B cell (primary cell): ENCODE measurements at regions of chr1 and their contacts with region 1.

Region 1: GRCh38 chr1:212291505-212292134 is 6.4 kb downstream of the PPP2R5A start:
- DNase-seq: peak; percentile 78
- ATAC-seq: peak; percentile 87
- H3K4me3 ChIP-seq: no peak overlapping the region
- H3K4me3 Mint-ChIP-seq: peak overlapping the region; percentile 21
- H3K27ac ChIP-seq: no peak overlapping the region
- H3K27ac Mint-ChIP-seq: peak overlapping the region; percentile 46
- H3K4me1 ChIP-seq: peaks cover 29 to 61% of the 10 kb centered on the region in 2 donors
- H3K4me1 Mint-ChIP-seq: peaks cover 77% of the 10 kb centered on the region
- H3K27me3 ChIP-seq: no peaks in the 10 kb centered on the region
- H3K27me3 Mint-ChIP-seq: no peaks in the 10 kb centered on the region
- CTCF ChIP-seq: peak; percentile 82

Region 2: DNA sequence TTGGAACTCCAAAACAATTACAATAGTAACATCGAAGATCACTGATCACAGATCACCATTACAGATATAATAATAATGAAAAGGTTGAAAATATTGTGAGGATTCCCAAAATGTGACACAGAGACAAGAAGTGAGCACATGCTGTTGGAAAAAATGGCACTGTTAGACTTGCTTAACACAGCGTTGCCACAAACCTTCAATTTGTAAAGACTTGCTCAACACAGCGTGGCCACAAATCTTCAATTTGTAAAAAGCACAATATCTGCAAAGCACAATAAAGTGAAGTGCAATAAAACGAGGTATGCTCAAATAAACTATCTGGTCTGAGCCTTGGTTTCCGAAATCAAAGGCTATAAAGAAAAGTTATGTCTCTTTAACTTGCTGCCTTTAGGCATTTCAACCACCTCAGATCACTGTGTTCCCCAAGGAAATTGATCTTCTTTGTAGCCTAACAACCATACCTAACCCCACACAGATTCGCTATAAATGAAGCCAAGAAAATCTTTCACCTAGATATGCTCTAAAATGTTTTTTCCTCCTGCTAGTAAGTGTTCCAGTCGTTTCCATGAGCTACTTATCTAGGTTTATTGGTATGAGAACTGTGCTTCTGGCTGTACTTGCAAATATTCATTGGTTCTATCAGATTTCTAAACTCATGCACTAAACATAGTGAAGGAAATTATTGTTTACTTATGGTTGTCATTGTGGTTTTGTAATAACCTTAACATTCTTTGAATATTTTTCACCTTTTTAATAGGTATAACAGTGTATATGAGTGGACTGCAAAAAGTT is 447.9 kb before region 1 on chr1:
- CTCF ChIA-PET with region 1: no interaction called
- POLR2A ChIA-PET with region 1: no interaction called
- intact Hi-C with region 1: no loop called
- DNase-seq: no peak
- ATAC-seq: no peak
- H3K4me3 ChIP-seq: no peak overlapping the region
- H3K4me3 Mint-ChIP-seq: peak overlapping the region; percentile 26
- H3K27ac ChIP-seq: no peak overlapping the region
- H3K27ac Mint-ChIP-seq: peak overlapping the region; percentile 32
- H3K4me1 ChIP-seq: peaks cover 7 to 8% of the 10 kb centered on the region in 2 donors
- H3K4me1 Mint-ChIP-seq: peaks cover 16% of the 10 kb centered on the region
- H3K27me3 ChIP-seq: no peaks in the 10 kb centered on the region
- H3K27me3 Mint-ChIP-seq: no peaks in the 10 kb centered on the region
- CTCF ChIP-seq: no peak

Region 3: GRCh38 chr1:212062832-212063438 is 228.7 kb before region 1 on chr1:
- CTCF ChIA-PET with region 1: interaction called, 91 read pairs
- POLR2A ChIA-PET with region 1: interaction called, 5 read pairs
- intact Hi-C with region 1: loop called (anchors 1 kb)
- DNase-seq: peak; percentile 56
- ATAC-seq: no peak
- H3K4me3 ChIP-seq: no peak overlapping the region
- H3K4me3 Mint-ChIP-seq: no peak overlapping the region
- H3K27ac ChIP-seq: no peak overlapping the region
- H3K27ac Mint-ChIP-seq: no peak overlapping the region
- H3K4me1 ChIP-seq: no peaks in the 10 kb centered on the region
- H3K4me1 Mint-ChIP-seq: no peaks in the 10 kb centered on the region
- H3K27me3 ChIP-seq: no peaks in the 10 kb centered on the region
- H3K27me3 Mint-ChIP-seq: no peaks in the 10 kb centered on the region
- CTCF ChIP-seq: peak; percentile 95

Region 4: DNA sequence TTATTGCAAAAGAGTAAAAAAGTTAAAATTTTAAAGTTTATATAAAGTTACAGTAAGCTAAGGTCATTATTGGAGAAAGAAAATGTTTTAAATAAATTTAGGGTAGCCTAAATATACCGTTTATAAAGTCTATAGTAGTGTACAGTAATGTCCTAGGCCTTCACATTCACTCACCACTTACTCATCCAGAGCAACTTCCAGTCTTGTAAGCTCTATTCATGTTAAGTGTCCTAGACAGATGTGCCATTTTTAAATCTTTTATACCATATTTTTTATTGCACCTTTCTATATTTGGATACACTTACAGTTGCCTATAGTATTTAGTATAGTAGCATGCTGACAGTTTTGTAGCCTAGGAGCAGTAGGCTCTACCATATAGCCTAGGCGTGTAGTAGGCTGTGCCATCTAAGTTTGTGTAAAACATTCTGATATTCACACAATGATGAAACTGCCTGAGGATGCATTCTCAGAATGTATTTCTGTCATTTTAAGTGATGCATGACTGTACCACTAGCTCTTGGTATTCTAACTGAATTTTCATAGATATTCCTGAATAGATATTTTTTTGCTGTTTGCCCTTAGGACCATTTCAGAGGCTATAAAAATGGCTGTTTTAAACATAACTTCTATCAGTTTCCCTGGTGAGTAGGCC is 20.4 kb after region 1 on chr1:
- CTCF ChIA-PET with region 1: interaction called, 10 read pairs
- POLR2A ChIA-PET with region 1: no interaction called
- intact Hi-C with region 1: no loop called
- DNase-seq: no peak
- ATAC-seq: no peak
- H3K4me3 ChIP-seq: no peak overlapping the region
- H3K4me3 Mint-ChIP-seq: no peak overlapping the region
- H3K27ac ChIP-seq: peak overlapping the region in 1 of 2 donors; percentile 28
- H3K27ac Mint-ChIP-seq: no peak overlapping the region
- H3K4me1 ChIP-seq: peaks cover 6 to 10% of the 10 kb centered on the region in 2 donors
- H3K4me1 Mint-ChIP-seq: peaks cover 47% of the 10 kb centered on the region
- H3K27me3 ChIP-seq: no peaks in the 10 kb centered on the region
- H3K27me3 Mint-ChIP-seq: no peaks in the 10 kb centered on the region
- CTCF ChIP-seq: no peak